Transverse colon (tissue), 4 donors: ENCODE measurements at regions of chr1 and their contacts with region 1.

Region 1: GRCh38 chr1:85128341-85128740 is 72.5 kb downstream of the SYDE2 start:
- DNase-seq: no peak
- H3K4me3 ChIP-seq: no peak overlapping the region
- H3K27ac ChIP-seq: no peak overlapping the region
- H3K4me1 ChIP-seq: peaks cover 0 to 7% (median 0%) of the 10 kb centered on the region in 4 donors
- H3K27me3 ChIP-seq: no peaks in the 10 kb centered on the region
- CTCF ChIP-seq: no peak
- EP300 ChIP-seq: no peak
- POLR2A ChIP-seq: no peak

Region 2: DNA sequence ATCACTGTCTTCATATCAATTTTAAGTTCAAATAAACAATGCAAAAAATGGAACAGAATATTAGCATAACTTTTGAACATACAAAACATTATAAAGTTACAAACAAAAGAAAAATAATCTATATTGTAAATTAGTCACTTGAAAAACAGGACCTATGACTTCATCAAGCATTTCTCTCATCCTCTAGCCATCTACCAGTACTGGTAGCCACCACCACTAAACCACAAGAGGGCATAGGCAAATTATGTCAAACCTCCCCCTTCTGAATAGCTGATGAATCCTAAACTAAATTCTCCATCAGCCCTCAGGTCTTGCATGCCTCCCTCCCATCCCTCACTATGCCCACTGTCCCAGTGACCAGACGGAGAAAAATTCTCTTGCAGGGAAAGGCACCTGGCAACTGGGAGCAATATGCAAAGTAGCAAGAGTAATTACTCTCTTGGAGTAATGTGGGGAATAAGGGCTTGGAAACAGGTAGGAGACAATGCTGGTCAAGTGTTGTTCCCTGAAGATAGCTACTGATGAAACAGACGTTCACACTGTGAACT is 475.1 kb before region 1 on chr1:
- in situ Hi-C with region 1: no loop called
- intact Hi-C with region 1: no loop called
- DNase-seq: no peak
- H3K4me3 ChIP-seq: no peak overlapping the region
- H3K27ac ChIP-seq: no peak overlapping the region
- H3K4me1 ChIP-seq: no peaks in the 10 kb centered on the region
- H3K27me3 ChIP-seq: no peaks in the 10 kb centered on the region
- CTCF ChIP-seq: no peak
- EP300 ChIP-seq: no peak
- POLR2A ChIP-seq: no peak

Region 3: GRCh38 chr1:84995484-84996334 is 132.6 kb before region 1 on chr1:
- in situ Hi-C with region 1: no loop called
- intact Hi-C with region 1: no loop called
- DNase-seq: no peak
- H3K4me3 ChIP-seq: peak overlapping the region in 2 of 4 donors; percentile 63 to 83
- H3K27ac ChIP-seq: peak overlapping the region in 2 of 4 donors; percentile 70 to 79
- H3K4me1 ChIP-seq: peaks cover 7 to 19% (median 16%) of the 10 kb centered on the region in 4 donors
- H3K27me3 ChIP-seq: peaks cover 47% of the 10 kb centered on the region
- CTCF ChIP-seq: no peak
- EP300 ChIP-seq: no peak
- POLR2A ChIP-seq: no peak

Region 4: GRCh38 chr1:85061711-85062424 is 66.5 kb before region 1 on chr1:
- in situ Hi-C with region 1: no loop called
- intact Hi-C with region 1: no loop called
- DNase-seq: peak; percentile 93
- H3K4me3 ChIP-seq: peak overlapping the region; percentile 37 to 47 (median 38)
- H3K27ac ChIP-seq: peak overlapping the region; percentile 43 to 70 (median 54)
- H3K4me1 ChIP-seq: peaks cover 0 to 8% (median 0%) of the 10 kb centered on the region in 4 donors
- H3K27me3 ChIP-seq: no peaks in the 10 kb centered on the region
- CTCF ChIP-seq: no peak
- EP300 ChIP-seq: no peak
- POLR2A ChIP-seq: no peak

Region 5: GRCh38 chr1:85230305-85230980 is 102.1 kb after region 1 on chr1:
- in situ Hi-C with region 1: loop called in 1 of 4 experiments (anchors 10 kb)
- intact Hi-C with region 1: no loop called
- DNase-seq: no peak
- H3K4me3 ChIP-seq: no peak overlapping the region
- H3K27ac ChIP-seq: peak overlapping the region in 1 of 4 donors; percentile 14
- H3K4me1 ChIP-seq: peaks cover 0 to 10% (median 5%) of the 10 kb centered on the region in 4 donors
- H3K27me3 ChIP-seq: no peaks in the 10 kb centered on the region
- CTCF ChIP-seq: peak in 4 of 5 experiments; percentile 12 to 24 (median 14)
- EP300 ChIP-seq: no peak
- POLR2A ChIP-seq: no peak